ENCODE measurements at regions of chr17 and their contacts with region 1.

Region 1: GRCh38 chr17:44314869-44315661 is 6.7 kb downstream of the RUNDC3A start:
- DNase-seq: no peak
- ATAC-seq: no peak

Region 2: GRCh38 chr17:43079578-43080302 is 1235.3 kb before region 1 on chr17:
- intact Hi-C with region 1: loop called (anchors 5 kb)
- DNase-seq: no peak
- ATAC-seq: no peak